Activated CD4-positive, alpha-beta memory T cell treated with anti-CD3 and anti-CD28 coated beads, Interleukin-2, amount 10 ng/mL, durations not matched to agents 7 days and 5 days (primary cell): ENCODE measurements at regions of chr2 and their contacts with region 1.

Region 1: DNA sequence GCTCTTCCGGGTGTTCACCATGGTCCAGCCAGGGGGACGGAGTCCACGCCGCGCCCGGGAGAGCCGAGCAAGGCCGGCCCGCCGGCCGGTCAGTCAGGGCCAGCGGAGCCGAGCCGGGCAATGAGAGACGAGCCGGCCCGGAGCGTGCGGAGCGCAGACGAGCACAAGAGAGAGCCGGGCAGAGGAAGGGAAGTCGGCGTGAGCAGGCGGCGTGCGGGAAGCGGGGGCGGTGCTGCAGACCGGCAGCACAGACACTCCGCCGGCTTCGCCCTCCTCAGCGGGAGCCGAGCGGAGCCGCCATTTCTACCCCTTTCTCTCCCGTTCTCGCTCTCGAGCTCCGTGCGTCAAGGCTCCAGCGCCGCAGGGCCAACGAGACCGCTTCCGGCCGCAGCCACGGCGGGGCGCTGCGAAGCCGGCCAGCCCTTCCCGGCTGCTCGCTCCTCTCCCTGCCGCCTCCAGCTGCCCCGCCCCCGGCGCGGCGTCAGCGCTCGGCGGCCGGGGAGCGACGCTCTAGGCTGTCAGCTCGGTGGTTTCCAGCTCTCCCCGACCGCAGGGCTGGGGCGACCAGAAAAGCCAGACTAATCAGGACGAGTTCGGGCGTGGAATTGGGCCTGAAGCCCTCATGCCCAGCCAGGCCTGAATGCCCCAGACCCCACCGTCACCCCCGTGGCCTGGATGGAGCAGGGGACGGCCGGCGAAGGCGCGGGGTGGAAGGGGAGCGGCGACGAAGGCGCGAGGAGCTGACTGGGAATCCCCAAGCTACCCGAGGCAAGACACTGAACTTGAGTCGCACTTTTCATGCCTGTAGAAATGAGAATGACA is at the start of gene ATAD2B:
- DNase-seq: peak; percentile 95
- H3K4me3 Mint-ChIP-seq: peak within 1 kb of the TSS; percentile 96
- H3K27ac Mint-ChIP-seq: peak within 1 kb of the TSS; percentile 94
- H3K4me1 Mint-ChIP-seq: peaks cover 34% of the 10 kb centered on the region
- H3K27me3 Mint-ChIP-seq: peaks cover 6% of the 10 kb centered on the region
- total RNA-seq, gene ATAD2B: 17.6 to 19.5 TPM

Region 2: DNA sequence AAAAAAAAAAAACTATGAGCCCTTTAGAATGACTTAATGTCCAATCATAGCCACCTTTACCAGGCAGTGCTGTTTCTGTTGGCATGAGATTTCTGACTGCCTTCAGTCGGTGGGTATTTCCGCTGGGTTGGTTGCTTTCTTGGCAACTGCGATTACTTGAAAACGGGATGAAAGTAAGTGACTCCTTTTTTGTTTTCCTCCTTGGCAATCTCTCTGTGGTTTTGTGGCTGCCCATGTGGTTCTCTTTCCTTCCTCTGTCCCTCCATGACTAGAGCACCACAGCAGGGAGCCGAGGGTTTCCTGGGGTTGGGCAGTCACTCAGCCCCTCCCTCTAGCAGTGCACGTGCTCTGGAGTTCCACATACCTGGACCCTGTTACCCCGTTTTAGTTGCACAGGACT is 429.9 kb before region 1 on chr2:
- CTCF ChIA-PET with region 1: no interaction called
- POLR2A ChIA-PET with region 1: no interaction called
- DNase-seq: peak; percentile 63
- H3K4me3 Mint-ChIP-seq: peak overlapping the region; percentile 2
- H3K27ac Mint-ChIP-seq: peak overlapping the region; percentile 28
- H3K4me1 Mint-ChIP-seq: peaks cover 32% of the 10 kb centered on the region
- H3K27me3 Mint-ChIP-seq: peaks cover 17% of the 10 kb centered on the region

Region 3: GRCh38 chr2:23824777-23825212 is 102.2 kb before region 1 on chr2:
- CTCF ChIA-PET with region 1: interaction called, 63 read pairs
- POLR2A ChIA-PET with region 1: interaction called, 29 read pairs
- DNase-seq: no peak
- H3K4me3 Mint-ChIP-seq: no peak overlapping the region
- H3K27ac Mint-ChIP-seq: no peak overlapping the region
- H3K4me1 Mint-ChIP-seq: no peaks in the 10 kb centered on the region
- H3K27me3 Mint-ChIP-seq: no peaks in the 10 kb centered on the region

Region 4: GRCh38 chr2:23939987-23940717 is 13.2 kb after region 1 on chr2 and contains the start of gene UBXN2A:
- CTCF ChIA-PET with region 1: interaction called, 48 read pairs
- POLR2A ChIA-PET with region 1: interaction called, 188 read pairs
- DNase-seq: peak; percentile 81
- H3K4me3 Mint-ChIP-seq: peak within 1 kb of the TSS; percentile 92
- H3K27ac Mint-ChIP-seq: peak within 1 kb of the TSS; percentile 84
- H3K4me1 Mint-ChIP-seq: peaks cover 24% of the 10 kb centered on the region
- H3K27me3 Mint-ChIP-seq: peaks cover 13% of the 10 kb centered on the region
- total RNA-seq, gene UBXN2A: 11.5 to 12.3 TPM

Region 5: GRCh38 chr2:24058564-24059271 is 131.8 kb after region 1 on chr2:
- CTCF ChIA-PET with region 1: interaction called, 13 read pairs
- POLR2A ChIA-PET with region 1: interaction called, 3 read pairs
- DNase-seq: no peak
- H3K4me3 Mint-ChIP-seq: no peak overlapping the region
- H3K27ac Mint-ChIP-seq: no peak overlapping the region
- H3K4me1 Mint-ChIP-seq: peaks cover 7% of the 10 kb centered on the region
- H3K27me3 Mint-ChIP-seq: no peaks in the 10 kb centered on the region

Region 6: DNA sequence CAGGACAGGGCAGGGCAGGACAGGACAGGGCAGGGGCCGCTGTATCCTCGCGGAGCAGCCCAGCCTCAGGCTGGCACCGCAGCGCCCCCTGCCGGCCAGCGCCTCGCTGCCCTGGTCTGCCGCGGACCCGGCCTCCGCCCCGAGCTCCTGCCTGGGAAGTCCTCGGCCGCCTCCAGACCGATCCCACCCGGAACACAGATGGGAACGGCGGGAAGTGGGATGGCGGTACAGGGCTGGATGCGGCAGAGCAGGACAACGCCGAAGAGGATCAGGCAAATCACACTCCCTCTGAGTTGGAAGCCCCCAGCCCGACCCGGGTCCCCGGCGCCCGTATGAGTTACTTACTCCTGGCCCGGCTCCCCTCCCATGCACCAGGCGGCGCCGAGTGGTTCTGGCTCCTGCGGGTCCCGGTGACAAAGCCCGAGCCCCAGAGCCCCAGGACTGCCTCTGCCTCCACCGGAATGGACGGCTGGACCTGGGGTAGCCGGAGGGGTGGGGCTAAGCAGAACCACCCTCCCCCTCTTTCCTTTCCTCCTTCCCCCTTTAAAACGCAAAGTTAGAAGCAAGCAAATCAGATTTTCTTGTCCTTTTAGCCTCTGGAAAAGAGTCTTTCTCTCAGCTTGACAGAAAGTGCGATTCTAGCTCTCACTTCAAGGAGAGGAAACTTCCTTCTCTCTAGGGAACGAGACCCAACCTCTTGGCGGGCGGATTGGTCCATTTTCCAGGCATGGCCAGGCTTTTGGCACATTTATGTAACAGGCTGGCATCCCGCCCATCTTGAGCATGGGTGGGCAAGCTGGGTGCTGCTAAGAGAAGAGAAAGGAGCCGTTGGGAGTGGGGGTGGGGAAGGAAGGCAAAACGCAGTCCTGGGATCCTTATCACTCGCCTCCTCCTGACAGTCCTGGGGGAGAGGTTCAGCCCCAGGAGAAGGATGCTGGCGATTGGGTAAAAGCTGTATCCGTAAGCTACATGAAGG is 157.7 kb after region 1 on chr2 and contains the start of gene TP53I3:
- CTCF ChIA-PET with region 1: interaction called, 62 read pairs
- POLR2A ChIA-PET with region 1: interaction called, 45 read pairs
- DNase-seq: peak; percentile 84
- H3K4me3 Mint-ChIP-seq: peak within 1 kb of the TSS; percentile 85
- H3K27ac Mint-ChIP-seq: peak within 1 kb of the TSS; percentile 85
- H3K4me1 Mint-ChIP-seq: peaks cover 21% of the 10 kb centered on the region
- H3K27me3 Mint-ChIP-seq: no peaks in the 10 kb centered on the region
- total RNA-seq, gene TP53I3: 2.7 to 2.9 TPM

Region 7: DNA sequence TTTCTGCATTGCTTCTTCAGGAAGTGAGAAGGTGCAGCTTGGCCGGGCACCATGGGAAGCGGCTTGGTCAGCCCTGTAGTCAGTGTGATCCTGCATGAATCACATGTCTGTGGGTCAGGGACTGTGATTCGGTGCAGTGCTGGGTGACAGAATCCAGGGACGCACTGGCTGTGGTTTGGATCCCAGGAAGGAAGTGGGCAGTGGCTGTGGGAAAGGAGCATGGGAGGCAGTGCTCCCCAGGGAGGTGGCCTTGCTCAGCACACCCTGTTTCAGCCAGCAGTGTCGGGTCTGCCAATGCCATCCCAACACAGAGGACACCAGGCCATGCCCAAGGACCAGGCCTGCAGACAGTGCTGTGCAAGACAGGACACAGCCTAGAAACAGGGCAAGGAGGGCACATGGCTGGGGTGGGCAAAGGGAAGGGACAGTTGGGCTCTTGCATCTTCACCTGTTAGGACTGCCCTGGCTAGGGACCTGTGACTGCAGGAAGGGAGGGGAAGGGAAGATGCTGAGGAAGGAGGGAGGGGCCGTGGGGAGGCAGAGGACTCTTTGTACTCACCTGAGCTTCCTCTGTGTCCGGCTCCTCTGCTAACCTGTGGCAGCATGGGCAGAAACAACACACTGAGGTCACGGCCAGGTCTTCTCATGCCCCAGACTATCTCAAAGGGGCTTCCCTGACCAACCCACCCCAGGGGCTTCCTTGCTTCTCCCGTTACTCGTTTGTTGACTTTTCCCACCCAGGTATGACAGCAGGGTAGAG is 1452.0 kb after region 1 on chr2:
- CTCF ChIA-PET with region 1: no interaction called
- POLR2A ChIA-PET with region 1: no interaction called
- DNase-seq: peak; percentile 15
- H3K4me3 Mint-ChIP-seq: no peak overlapping the region
- H3K27ac Mint-ChIP-seq: peak overlapping the region; percentile 49
- H3K4me1 Mint-ChIP-seq: peaks cover 28% of the 10 kb centered on the region
- H3K27me3 Mint-ChIP-seq: no peaks in the 10 kb centered on the region